Activated naive CD4-positive, alpha-beta T cell treated with anti-CD3 and anti-CD28 coated beads for 36 hours (primary cell): ENCODE measurements at regions of chr3 and their contacts with region 1.

Region 1: GRCh38 chr3:46866720-46867549 is 3.7 kb upstream of the MYL3 start:
- DNase-seq: peak; percentile 84
- H3K4me3 Mint-ChIP-seq: no peak overlapping the region
- H3K27ac Mint-ChIP-seq: no peak overlapping the region
- H3K4me1 Mint-ChIP-seq: no peaks in the 10 kb centered on the region
- H3K27me3 Mint-ChIP-seq: no peaks in the 10 kb centered on the region

Region 2: GRCh38 chr3:46909535-46910442 is 42.9 kb after region 1 on chr3:
- CTCF ChIA-PET with region 1: interaction called, 9 read pairs
- intact Hi-C with region 1: loop called (anchors 1 kb)
- DNase-seq: peak; percentile 91
- H3K4me3 Mint-ChIP-seq: no peak overlapping the region
- H3K27ac Mint-ChIP-seq: no peak overlapping the region
- H3K4me1 Mint-ChIP-seq: peaks cover 10% of the 10 kb centered on the region
- H3K27me3 Mint-ChIP-seq: no peaks in the 10 kb centered on the region

Region 3: DNA sequence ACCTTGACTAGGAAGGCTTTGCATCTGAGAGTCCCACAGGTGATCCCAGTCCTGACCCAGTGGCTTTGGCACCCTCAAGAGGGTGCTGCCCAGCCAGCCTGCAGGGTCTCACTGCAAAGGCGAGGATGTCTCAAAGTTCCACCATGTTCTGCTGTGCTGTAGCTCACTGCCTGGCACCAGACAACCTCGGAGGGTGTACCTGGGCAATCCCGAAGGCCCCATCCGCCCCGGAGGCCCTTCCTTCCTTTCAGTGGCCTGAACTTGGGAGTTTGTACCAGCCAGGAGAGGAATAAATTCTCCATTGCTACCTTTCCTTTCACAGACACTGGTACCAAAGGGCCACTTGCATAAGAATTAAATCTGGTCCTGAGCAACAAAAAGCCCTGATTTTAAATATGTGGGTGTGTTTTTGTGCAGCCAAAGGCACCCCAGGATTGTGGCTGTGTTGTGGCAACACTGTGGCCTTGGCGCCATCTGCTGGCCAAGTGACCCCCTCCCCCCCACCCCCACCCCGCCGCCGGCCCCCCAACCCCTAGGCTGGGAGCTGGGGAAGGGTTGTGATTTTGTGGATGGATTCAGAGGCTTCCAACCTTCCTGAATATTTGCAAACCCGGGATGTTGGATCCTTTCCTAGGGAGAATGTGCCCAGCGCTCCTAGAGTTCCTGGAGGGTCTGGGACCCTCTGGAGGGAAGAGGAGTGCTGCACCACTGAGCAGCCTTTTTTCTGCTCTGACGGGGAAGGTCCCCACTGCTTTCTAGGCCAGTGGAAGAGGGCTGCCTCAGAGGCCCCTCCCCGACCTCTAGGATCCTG is 504.2 kb after region 1 on chr3:
- CTCF ChIA-PET with region 1: no interaction called
- intact Hi-C with region 1: loop called (anchors 2 kb)
- DNase-seq: peak; percentile 53
- H3K4me3 Mint-ChIP-seq: no peak overlapping the region
- H3K27ac Mint-ChIP-seq: no peak overlapping the region
- H3K4me1 Mint-ChIP-seq: no peaks in the 10 kb centered on the region
- H3K27me3 Mint-ChIP-seq: peaks cover 10% of the 10 kb centered on the region